Caco-2 (cell line): ENCODE measurements at regions of chr2 and their contacts with region 1.

Region 1: DNA sequence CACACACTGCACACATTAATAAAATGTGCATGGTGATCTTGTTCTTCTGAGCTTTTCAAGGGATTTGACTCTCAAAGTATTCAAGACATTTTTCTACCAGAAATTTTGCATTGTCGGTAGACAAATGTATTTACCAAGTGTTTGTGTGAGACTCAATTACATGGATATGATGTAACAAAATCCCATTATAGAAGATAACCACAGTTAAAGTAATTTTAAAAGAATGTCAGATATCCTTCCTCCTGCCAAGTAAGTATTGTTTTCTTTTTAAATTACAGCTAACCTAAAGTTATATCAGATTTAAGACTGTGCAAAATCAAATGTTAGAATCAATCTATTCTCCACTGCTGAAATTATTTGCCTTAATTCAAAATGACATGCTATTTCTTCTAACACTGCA is 1344.5 kb upstream of the CHAC2 start:
- DNase-seq: no peak
- H3K4me3 ChIP-seq: no peak overlapping the region
- H3K4me3 Mint-ChIP-seq: no peak overlapping the region
- H3K27ac Mint-ChIP-seq: no peak overlapping the region
- H3K4me1 ChIP-seq: peaks cover 3% of the 10 kb centered on the region; the same call in 1 of the 2 replicates
- H3K4me1 Mint-ChIP-seq: no peaks in the 10 kb centered on the region
- H3K27me3 ChIP-seq: no peaks in the 10 kb centered on the region
- H3K27me3 Mint-ChIP-seq: no peaks in the 10 kb centered on the region
- CTCF ChIP-seq: no peak

Region 2: DNA sequence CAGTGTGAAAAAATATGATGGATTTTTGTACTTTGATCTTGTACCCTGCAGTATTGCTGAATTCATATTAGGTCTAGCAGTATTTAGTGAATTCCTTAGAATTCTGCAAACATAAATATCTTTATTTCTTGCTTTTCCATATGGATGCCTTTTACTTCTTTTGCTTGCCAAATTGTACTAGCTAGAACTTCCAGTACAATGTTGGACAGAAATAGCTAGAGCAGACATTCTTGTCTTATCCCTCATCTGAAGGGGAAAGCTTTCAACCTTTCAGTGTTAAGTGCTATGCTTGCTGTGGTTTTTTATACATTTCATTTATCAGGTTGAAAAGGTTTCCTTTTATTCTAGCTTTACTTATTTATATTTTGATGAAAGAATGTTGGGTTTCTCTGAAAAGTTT is 22.6 kb after region 1 on chr2:
- CTCF ChIA-PET with region 1: no interaction called
- POLR2A ChIA-PET with region 1: no interaction called
- intact Hi-C with region 1: loop called (anchors 1 kb)
- DNase-seq: no peak
- H3K4me3 ChIP-seq: no peak overlapping the region
- H3K4me3 Mint-ChIP-seq: no peak overlapping the region
- H3K27ac Mint-ChIP-seq: no peak overlapping the region
- H3K4me1 ChIP-seq: peaks cover 3% of the 10 kb centered on the region
- H3K4me1 Mint-ChIP-seq: peaks cover 3% of the 10 kb centered on the region
- H3K27me3 ChIP-seq: no peaks in the 10 kb centered on the region
- H3K27me3 Mint-ChIP-seq: no peaks in the 10 kb centered on the region
- CTCF ChIP-seq: no peak

Region 3: GRCh38 chr2:52475590-52475989 is 52.5 kb after region 1 on chr2:
- CTCF ChIA-PET with region 1: no interaction called
- POLR2A ChIA-PET with region 1: no interaction called
- intact Hi-C with region 1: no loop called
- DNase-seq: no peak
- H3K4me3 ChIP-seq: no peak overlapping the region
- H3K4me3 Mint-ChIP-seq: no peak overlapping the region
- H3K27ac Mint-ChIP-seq: no peak overlapping the region
- H3K4me1 ChIP-seq: no peaks in the 10 kb centered on the region
- H3K4me1 Mint-ChIP-seq: no peaks in the 10 kb centered on the region
- H3K27me3 ChIP-seq: no peaks in the 10 kb centered on the region
- H3K27me3 Mint-ChIP-seq: no peaks in the 10 kb centered on the region
- CTCF ChIP-seq: no peak

Region 4: GRCh38 chr2:53252115-53252514 is 829.0 kb after region 1 on chr2:
- CTCF ChIA-PET with region 1: no interaction called
- POLR2A ChIA-PET with region 1: no interaction called
- intact Hi-C with region 1: no loop called
- DNase-seq: no peak
- H3K4me3 ChIP-seq: no peak overlapping the region
- H3K4me3 Mint-ChIP-seq: no peak overlapping the region
- H3K27ac Mint-ChIP-seq: no peak overlapping the region
- H3K4me1 ChIP-seq: no peaks in the 10 kb centered on the region
- H3K4me1 Mint-ChIP-seq: no peaks in the 10 kb centered on the region
- H3K27me3 ChIP-seq: no peaks in the 10 kb centered on the region
- H3K27me3 Mint-ChIP-seq: no peaks in the 10 kb centered on the region
- CTCF ChIP-seq: no peak